ENCODE measurements at regions of chr2 and their contacts with region 1.

Region 1: GRCh38 chr2:207920321-207920720 is 105.0 kb downstream of the PLEKHM3 start:
- DNase-seq: no peak
- ATAC-seq: no peak
- H3K4me3 Mint-ChIP-seq: no peak overlapping the region
- H3K27ac Mint-ChIP-seq: no peak overlapping the region
- H3K4me1 Mint-ChIP-seq: peaks cover 6% of the 10 kb centered on the region
- H3K27me3 Mint-ChIP-seq: no peaks in the 10 kb centered on the region

Region 2: DNA sequence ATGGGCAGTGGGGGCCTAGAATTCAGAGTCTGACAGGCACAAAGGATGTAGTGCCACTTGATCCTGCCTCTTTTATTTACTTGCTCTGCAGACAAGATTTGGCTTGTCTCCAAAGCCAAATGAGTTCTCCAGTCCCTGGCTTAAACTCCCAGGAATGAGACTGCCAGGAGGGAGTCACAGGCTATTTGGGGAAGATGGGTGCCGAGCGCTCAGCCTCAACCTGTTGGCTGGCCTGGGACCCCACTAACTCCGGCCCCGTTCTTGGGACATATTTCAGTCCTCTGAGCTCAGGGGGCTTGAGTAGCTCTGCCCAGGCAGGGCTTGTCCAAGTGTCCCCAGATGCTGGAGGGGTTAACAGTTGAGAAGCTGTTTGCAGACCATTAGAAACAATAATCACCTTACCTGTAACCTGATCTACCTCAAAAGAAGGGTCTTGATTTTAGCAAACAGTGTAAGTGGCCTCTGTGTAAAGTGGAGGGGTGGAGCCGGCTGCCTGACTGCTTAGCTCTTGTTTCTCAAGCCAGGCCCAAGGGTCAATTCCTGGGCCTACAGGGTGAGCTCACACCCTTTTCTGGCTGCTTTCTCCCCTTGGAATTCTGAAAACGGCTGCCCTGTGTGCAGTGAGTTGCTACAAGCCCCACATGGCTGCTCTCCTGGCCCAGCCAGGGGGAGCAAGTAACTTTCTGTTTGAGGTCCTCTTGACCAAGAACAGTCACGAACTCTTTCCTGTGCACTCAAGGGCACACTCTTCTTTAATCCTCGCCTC is 123.6 kb before region 1 on chr2:
- CTCF ChIA-PET with region 1: no interaction called
- POLR2A ChIA-PET with region 1: interaction called, 12 read pairs
- intact Hi-C with region 1: no loop called
- DNase-seq: no peak
- ATAC-seq: no peak
- H3K4me3 Mint-ChIP-seq: no peak overlapping the region
- H3K27ac Mint-ChIP-seq: no peak overlapping the region
- H3K4me1 Mint-ChIP-seq: peaks cover 5% of the 10 kb centered on the region
- H3K27me3 Mint-ChIP-seq: peaks cover 4% of the 10 kb centered on the region

Region 3: DNA sequence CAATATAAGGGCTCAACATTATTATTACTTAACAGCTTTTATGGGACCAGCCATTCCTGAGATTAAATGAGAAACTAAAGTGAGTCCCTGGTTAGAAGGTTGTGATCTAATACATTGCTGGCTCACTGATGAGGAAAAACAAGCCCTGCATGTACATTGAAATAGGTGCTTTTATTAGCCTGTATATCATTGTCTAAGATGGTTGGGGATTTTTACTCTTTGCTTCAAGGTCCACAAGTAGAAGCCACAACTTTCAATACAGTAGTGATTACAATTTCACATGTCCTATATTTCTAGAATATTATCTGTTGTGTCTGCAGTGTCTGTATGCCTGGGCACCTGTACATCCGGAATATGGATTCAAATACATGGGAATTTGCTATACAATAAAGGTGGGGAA is 46.5 kb before region 1 on chr2:
- CTCF ChIA-PET with region 1: no interaction called
- POLR2A ChIA-PET with region 1: no interaction called
- intact Hi-C with region 1: no loop called
- DNase-seq: no peak
- ATAC-seq: no peak
- H3K4me3 Mint-ChIP-seq: no peak overlapping the region
- H3K27ac Mint-ChIP-seq: no peak overlapping the region
- H3K4me1 Mint-ChIP-seq: no peaks in the 10 kb centered on the region
- H3K27me3 Mint-ChIP-seq: no peaks in the 10 kb centered on the region

Region 4: DNA sequence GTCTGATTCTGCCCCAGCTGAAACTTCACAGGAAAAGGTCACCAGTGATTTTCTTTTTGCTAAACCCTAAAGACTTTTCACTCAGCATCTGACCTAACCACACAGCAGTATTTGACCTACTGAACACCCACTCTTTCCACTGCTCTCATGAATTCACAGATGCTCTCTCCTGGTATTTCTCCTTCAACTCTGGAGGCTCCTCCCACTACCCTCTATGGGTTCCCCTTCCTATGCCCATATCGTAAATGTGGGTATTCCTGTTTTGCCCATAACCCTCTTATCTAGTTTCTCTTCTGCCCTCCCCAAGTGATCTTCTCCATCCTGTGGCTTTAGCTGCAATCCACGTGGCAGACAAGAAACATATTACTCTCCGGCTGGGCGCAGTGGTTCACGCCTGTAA is 97.4 kb after region 1 on chr2:
- CTCF ChIA-PET with region 1: no interaction called
- POLR2A ChIA-PET with region 1: no interaction called
- intact Hi-C with region 1: no loop called
- DNase-seq: peak; percentile 9
- ATAC-seq: peak; percentile 70
- H3K4me3 Mint-ChIP-seq: peak overlapping the region; percentile 13
- H3K27ac Mint-ChIP-seq: peak overlapping the region; percentile 80
- H3K4me1 Mint-ChIP-seq: peaks cover 44% of the 10 kb centered on the region
- H3K27me3 Mint-ChIP-seq: no peaks in the 10 kb centered on the region

Measured in activated CD4-positive, alpha-beta T cell treated with anti-CD3 and anti-CD28 coated beads for 36 hours (primary cell).